Activated CD4-positive, alpha-beta T cell treated with anti-CD3 and anti-CD28 coated beads, Interleukin-2, amount 10 ng/mL, durations not matched to agents 24 days and 14 days (primary cell): ENCODE measurements at regions of chr17 and their contacts with region 1.

Region 1: DNA sequence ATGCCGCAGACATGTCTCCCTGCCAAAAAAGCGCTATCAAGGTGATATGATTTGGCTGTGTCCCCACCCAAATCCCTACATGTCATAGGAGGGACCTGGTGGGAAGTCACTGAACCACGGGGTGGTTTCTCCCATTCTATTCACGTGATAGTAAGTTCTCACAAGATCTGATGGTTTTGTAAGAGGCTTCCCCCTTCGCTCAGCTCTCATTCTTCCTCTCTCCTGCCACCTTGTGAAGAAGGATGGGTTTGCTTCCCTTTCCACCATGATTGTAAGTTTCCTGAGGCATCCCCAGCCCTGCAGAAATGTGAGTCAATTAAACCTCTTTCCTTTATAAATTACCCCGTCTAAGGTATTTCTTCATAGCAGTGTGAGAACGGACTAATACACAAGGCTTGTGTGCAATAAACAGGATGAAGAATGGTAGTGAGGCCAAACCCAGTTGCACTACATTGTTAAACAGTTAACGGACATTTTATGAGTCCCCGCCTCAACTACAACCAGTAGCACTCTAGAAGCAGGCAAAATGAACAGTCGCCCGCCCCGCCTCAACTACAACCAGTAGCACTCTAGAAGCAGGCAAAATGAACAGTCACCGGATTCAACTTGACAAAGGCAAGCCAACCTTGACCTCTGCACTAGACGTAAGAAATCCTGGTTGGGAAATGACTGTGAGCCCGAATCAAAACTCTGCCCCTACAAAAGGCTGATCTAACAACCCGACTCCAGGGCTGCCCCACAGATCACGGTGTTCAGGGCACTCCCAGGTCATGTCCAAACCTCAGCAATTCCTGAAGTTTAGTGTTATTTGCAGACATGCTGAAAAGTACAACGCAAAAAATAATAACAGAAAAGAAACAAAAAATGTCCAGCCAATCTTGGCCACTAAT is 26.3 kb downstream of the VPS53 start:
- DNase-seq: peak; percentile 73
- H3K4me3 Mint-ChIP-seq: no peak overlapping the region
- H3K27ac Mint-ChIP-seq: no peak overlapping the region
- H3K4me1 Mint-ChIP-seq: peaks cover 9% of the 10 kb centered on the region
- H3K27me3 Mint-ChIP-seq: no peaks in the 10 kb centered on the region

Region 2: GRCh38 chr17:409848-410545 is 278.3 kb before region 1 on chr17:
- intact Hi-C with region 1: loop called (anchors 5 kb)
- DNase-seq: peak; percentile 100
- H3K4me3 Mint-ChIP-seq: peak overlapping the region; percentile 93
- H3K27ac Mint-ChIP-seq: peak overlapping the region; percentile 100
- H3K4me1 Mint-ChIP-seq: peaks cover 57% of the 10 kb centered on the region
- H3K27me3 Mint-ChIP-seq: peaks cover 5% of the 10 kb centered on the region

Region 3: GRCh38 chr17:661509-661908 is 26.8 kb before region 1 on chr17:
- intact Hi-C with region 1: no loop called
- DNase-seq: no peak
- H3K4me3 Mint-ChIP-seq: no peak overlapping the region
- H3K27ac Mint-ChIP-seq: no peak overlapping the region
- H3K4me1 Mint-ChIP-seq: peaks cover 3% of the 10 kb centered on the region
- H3K27me3 Mint-ChIP-seq: no peaks in the 10 kb centered on the region

Region 4: DNA sequence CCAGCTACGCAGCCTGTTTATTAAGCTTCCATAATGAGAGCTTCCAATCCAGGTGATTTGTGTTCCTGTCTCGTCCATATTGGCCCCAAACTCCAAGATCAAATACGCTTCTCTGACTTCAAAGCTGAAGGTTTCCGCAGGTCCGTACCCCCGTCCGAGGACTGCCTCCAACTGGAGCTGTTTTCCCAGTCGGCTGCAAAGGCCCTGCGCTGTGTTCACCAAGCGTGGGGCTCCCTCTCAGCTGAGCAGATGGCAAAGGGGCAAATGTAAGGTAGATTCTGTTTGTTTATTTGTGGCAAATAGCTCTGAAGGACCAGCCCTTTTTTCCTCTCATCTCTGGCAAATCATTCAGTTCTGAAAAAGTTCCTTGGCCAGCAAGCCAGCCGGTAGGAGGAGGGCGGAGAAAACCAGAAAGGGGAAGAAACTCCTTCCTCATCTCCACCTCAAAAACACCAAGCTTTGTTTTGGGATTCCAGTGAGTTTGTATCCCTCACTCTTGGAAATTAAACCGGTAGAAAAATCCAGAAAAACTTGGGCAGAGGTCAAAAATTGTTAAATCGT is 256.0 kb after region 1 on chr17:
- intact Hi-C with region 1: no loop called
- DNase-seq: no peak
- H3K4me3 Mint-ChIP-seq: no peak overlapping the region
- H3K27ac Mint-ChIP-seq: no peak overlapping the region
- H3K4me1 Mint-ChIP-seq: no peaks in the 10 kb centered on the region
- H3K27me3 Mint-ChIP-seq: no peaks in the 10 kb centered on the region